Left lung (tissue), 14 donors: ENCODE measurements at regions of chr3 and their contacts with region 1.

Region 1: GRCh38 chr3:133927540-133928066 is 31.9 kb upstream of the RAB6B start:
- DNase-seq: peak in 3 of 4 donors; percentile 67 to 89 (median 73)
- ATAC-seq: peak; percentile 88
- H3K4me3 ChIP-seq: peak overlapping the region; percentile 40 to 51
- H3K27ac ChIP-seq: no peak overlapping the region
- H3K4me1 ChIP-seq: peaks cover 0 to 16% of the 10 kb centered on the region in 2 donors
- H3K27me3 ChIP-seq: peaks cover 0 to 18% of the 10 kb centered on the region in 2 donors
- CTCF ChIP-seq: peak; percentile 73 to 88

Region 2: DNA sequence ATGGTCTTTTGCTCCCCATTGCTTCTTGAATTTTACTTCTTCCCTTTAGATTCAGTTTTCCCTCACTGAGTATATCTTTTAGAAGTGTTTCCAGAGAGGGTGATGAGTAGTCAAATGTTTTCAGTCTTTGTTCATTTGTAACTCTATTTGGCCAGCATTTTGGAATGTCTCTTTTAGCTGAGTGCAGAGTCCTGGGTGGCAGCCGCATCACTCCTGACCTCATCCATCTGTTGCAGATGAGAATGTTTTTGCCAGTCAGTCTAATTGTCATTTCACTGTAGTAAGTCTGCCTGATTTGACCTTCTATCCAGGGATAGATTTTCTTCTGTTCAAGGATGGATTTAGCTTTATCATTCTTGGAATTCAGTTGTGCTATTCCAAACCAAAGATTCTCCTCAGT is 114.7 kb before region 1 on chr3:
- intact Hi-C with region 1: loop called in 1 of 2 experiments (anchors 5 kb)
- DNase-seq: no peak
- ATAC-seq: no peak
- H3K4me3 ChIP-seq: no peak overlapping the region
- H3K27ac ChIP-seq: no peak overlapping the region
- H3K4me1 ChIP-seq: peaks cover 0 to 3% of the 10 kb centered on the region in 2 donors
- H3K27me3 ChIP-seq: no peaks in the 10 kb centered on the region
- CTCF ChIP-seq: no peak

Region 3: DNA sequence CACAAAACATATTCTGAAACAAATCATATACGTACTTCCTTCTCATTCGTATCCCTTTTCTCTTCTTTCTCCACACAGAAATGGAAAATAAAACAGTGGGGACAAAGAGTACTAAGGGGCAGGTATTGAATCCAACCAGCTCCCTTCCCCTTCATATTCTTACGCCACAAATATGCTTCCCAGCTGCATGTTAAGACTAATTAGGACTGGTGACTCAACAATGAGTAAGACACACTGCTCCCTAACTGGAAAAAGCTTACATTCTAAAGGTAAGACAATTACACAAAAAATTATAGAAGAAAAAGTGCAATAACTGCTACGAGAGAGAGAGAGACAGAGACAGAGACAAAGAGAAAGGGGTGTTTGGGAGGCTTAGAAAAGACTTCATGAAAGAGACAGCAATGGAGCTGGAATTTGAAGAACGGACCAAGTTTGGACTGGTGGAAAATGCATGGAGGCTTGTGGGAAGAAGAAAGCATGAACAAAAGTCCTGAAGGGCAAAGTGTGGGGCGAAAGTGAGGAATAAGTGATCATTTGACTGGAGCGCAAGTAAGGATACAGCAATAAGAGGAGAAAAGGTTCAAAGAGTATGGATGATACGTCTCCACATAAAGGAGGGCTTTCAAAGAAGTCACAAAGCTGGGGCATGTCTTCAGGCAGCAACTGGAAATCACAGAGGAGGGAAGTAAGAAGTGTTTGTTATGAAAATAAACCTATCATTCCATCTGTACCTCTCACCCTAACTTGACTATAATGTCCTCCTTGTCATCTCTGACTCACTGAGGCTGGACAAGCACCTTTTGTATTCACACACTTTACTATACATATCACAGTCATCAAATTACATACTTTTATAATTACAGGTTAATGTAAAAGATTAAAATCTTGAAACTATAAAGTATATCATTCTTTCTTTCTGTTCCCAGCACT is 273.9 kb after region 1 on chr3:
- intact Hi-C with region 1: loop called in 1 of 2 experiments (anchors 10 kb)
- DNase-seq: no peak
- ATAC-seq: no peak
- H3K4me3 ChIP-seq: no peak overlapping the region
- H3K27ac ChIP-seq: no peak overlapping the region
- H3K4me1 ChIP-seq: no peaks in the 10 kb centered on the region
- H3K27me3 ChIP-seq: no peaks in the 10 kb centered on the region
- CTCF ChIP-seq: no peak